IMR-90 (cell line): ENCODE measurements at regions of chr12 and their contacts with region 1.

Region 1: DNA sequence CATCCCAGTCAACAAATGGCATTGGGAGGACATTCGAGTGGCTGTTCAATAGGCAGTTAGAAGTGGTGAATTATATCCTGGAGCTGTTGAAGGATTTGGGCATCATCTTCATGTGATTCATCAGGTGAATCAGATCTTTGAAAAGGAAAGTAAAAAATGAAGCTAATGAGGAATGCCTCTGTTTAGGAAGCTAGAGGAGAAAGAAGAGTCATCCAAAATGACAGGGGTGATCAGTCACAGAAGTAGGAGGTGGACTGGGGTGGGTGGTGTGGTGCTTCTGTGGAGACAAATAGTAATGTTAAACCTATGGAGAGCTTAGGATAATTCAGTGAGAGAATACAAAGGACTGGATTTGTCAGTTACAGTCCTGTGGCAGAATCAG is 32.7 kb downstream of the DIP2B start:
- DNase-seq: peak; percentile 85
- ATAC-seq: peak; percentile 55
- H3K4me3 ChIP-seq: no peak overlapping the region
- H3K27ac ChIP-seq: no peak overlapping the region
- H3K4me1 ChIP-seq: peaks cover 6% of the 10 kb centered on the region
- H3K27me3 ChIP-seq: no peaks in the 10 kb centered on the region
- CTCF ChIP-seq: no peak
- POLR2A ChIP-seq: no peak
- RAD21 ChIP-seq: no peak

Region 2: DNA sequence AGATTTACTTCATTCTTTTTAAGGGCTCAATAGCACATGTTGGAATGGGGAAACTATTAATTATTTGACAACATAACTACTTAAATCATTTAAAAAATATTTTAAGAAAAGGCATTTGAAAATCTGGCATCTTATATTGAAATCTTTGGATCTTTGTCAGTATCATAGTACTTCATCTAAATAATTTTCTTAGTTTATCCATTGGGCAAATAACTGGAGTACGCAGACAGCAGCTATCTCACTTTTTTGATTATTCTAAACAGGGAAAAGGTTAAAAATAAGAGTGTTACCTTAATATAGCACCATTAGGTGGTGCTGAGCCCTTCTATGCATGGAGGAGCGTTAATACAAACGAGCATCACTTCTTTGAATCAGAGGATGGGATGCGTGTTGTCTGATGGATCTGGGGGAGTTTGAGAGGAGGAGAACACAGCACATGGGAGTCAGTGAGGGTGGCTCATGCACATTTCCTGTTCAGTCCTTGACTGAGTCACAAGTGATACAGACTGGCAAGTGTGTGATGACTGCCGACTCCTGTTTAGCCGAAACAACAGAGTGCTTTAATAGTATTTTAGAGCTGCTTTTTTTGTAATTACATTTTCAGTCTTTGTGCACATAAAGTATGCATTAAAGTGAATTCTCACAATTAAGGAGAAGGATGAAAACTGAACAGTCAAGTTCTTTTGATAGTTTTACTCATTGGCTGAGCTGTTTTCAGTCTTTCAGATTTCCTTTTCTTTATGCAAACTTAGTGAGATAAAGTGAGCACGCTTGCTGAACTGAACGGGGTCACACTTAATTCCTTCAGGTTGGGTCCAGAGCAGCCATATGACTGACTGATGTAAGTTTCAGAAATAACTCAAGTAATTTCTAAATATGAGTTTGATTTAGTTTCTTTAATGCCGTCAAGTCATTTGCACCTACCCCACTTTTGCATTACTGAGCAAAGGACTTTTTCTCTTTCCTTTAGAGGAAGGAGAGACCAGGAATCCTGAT is 60.0 kb after region 1 on chr12:
- CTCF ChIA-PET with region 1: no interaction called
- POLR2A ChIA-PET with region 1: no interaction called
- dilution Hi-C with region 1: no loop called
- in situ Hi-C with region 1: loop called (anchors 10 kb)
- intact Hi-C with region 1: no loop called
- DNase-seq: peak; percentile 93
- ATAC-seq: peak; percentile 94
- H3K4me3 ChIP-seq: no peak overlapping the region
- H3K27ac ChIP-seq: 0 out of 2 replicates have a peak overlapping the region, but pooled peaks have one; percentile 38
- H3K4me1 ChIP-seq: peaks cover 3% of the 10 kb centered on the region; the same call in 1 of the 2 replicates
- H3K27me3 ChIP-seq: no peaks in the 10 kb centered on the region
- CTCF ChIP-seq: 0 out of 2 replicates have a peak, but pooled peaks have one; percentile 14
- POLR2A ChIP-seq: peak; percentile 35; the same call in 1 of the 2 replicates
- RAD21 ChIP-seq: peak; percentile 35; the same call in 1 of the 2 replicates